CD14-positive monocyte (primary cell): ENCODE measurements at regions of chr7 and their contacts with region 1.

Region 1: GRCh38 chr7:134165252-134165651 is 38.1 kb downstream of the LRGUK start:
- DNase-seq: no peak
- H3K4me3 ChIP-seq: no peak overlapping the region
- H3K4me3 Mint-ChIP-seq: no peak overlapping the region
- H3K27ac ChIP-seq: no peak overlapping the region
- H3K27ac Mint-ChIP-seq: no peak overlapping the region
- H3K4me1 ChIP-seq: no peaks in the 10 kb centered on the region
- H3K4me1 Mint-ChIP-seq: no peaks in the 10 kb centered on the region
- H3K27me3 ChIP-seq: no peaks in the 10 kb centered on the region
- H3K27me3 Mint-ChIP-seq: peaks cover 0 to 2% (median 0%) of the 10 kb centered on the region in 3 donors
- CTCF ChIP-seq: no peak

Region 2: GRCh38 chr7:134200970-134201369 is 35.7 kb after region 1 on chr7:
- intact Hi-C with region 1: loop called in 1 of 2 experiments (anchors 5 kb)
- DNase-seq: no peak
- H3K4me3 ChIP-seq: no peak overlapping the region
- H3K4me3 Mint-ChIP-seq: no peak overlapping the region
- H3K27ac ChIP-seq: no peak overlapping the region
- H3K27ac Mint-ChIP-seq: peak overlapping the region in 1 of 7 donors; percentile 20
- H3K4me1 ChIP-seq: no peaks in the 10 kb centered on the region
- H3K4me1 Mint-ChIP-seq: no peaks in the 10 kb centered on the region
- H3K27me3 ChIP-seq: peaks cover 0 to 3% of the 10 kb centered on the region in 2 donors
- H3K27me3 Mint-ChIP-seq: peaks cover 0 to 5% (median 4%) of the 10 kb centered on the region in 3 donors
- CTCF ChIP-seq: no peak